ENCODE measurements at regions of chr1 and their contacts with region 1.

Region 1: GRCh38 chr1:169122976-169123375 is 16.5 kb downstream of the ATP1B1 start:
- DNase-seq: no peak
- H3K4me3 ChIP-seq: no peak overlapping the region
- H3K27ac ChIP-seq: no peak overlapping the region
- H3K4me1 ChIP-seq: no peaks in the 10 kb centered on the region
- H3K27me3 ChIP-seq: no peaks in the 10 kb centered on the region
- CTCF ChIP-seq: no peak

Region 2: DNA sequence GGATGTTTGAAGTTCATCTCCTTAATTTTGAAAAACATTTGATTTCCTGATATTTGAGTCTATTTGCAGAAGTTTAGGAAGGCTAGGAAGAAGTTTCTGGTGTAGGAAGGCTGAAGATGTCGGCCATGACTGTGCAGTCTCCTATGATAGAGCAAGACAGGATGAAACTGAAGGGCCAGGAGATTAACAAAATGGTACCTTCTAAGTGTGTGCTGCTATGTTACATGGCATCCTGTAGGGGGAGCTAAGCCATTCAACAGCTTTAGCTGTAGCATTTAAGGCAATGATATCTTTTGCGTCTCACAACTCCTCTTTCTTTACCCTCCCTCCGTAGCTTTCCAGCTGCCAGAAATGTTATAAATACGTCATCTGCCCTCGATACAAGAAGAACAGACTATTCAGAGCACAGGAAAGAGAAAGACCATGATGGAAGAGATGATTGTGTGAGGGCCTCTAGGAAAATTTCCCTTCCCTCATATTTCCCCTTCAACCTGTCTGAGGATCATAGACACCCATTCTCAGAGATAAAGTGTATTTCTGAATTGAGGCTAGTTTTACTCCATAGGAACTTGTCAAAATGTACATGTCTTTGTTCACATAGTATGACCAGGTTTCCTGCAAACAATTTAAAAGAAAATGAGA is 485.5 kb before region 1 on chr1:
- intact Hi-C with region 1: loop called (anchors 10 kb)
- DNase-seq: no peak
- H3K4me3 ChIP-seq: no peak overlapping the region
- H3K27ac ChIP-seq: no peak overlapping the region
- H3K4me1 ChIP-seq: no peaks in the 10 kb centered on the region
- H3K27me3 ChIP-seq: no peaks in the 10 kb centered on the region
- CTCF ChIP-seq: peak; percentile 40

Region 3: GRCh38 chr1:169392406-169392805 is 269.4 kb after region 1 on chr1:
- intact Hi-C with region 1: no loop called
- DNase-seq: no peak
- H3K4me3 ChIP-seq: no peak overlapping the region
- H3K27ac ChIP-seq: no peak overlapping the region
- H3K4me1 ChIP-seq: no peaks in the 10 kb centered on the region
- H3K27me3 ChIP-seq: no peaks in the 10 kb centered on the region
- CTCF ChIP-seq: no peak